ENCODE measurements at regions of chr7 and their contacts with region 1.

Region 1: GRCh38 chr7:65872776-65873581 is at the start of gene VKORC1L1:
- DNase-seq: peak; percentile 76 to 97 (median 94)

Region 2: DNA sequence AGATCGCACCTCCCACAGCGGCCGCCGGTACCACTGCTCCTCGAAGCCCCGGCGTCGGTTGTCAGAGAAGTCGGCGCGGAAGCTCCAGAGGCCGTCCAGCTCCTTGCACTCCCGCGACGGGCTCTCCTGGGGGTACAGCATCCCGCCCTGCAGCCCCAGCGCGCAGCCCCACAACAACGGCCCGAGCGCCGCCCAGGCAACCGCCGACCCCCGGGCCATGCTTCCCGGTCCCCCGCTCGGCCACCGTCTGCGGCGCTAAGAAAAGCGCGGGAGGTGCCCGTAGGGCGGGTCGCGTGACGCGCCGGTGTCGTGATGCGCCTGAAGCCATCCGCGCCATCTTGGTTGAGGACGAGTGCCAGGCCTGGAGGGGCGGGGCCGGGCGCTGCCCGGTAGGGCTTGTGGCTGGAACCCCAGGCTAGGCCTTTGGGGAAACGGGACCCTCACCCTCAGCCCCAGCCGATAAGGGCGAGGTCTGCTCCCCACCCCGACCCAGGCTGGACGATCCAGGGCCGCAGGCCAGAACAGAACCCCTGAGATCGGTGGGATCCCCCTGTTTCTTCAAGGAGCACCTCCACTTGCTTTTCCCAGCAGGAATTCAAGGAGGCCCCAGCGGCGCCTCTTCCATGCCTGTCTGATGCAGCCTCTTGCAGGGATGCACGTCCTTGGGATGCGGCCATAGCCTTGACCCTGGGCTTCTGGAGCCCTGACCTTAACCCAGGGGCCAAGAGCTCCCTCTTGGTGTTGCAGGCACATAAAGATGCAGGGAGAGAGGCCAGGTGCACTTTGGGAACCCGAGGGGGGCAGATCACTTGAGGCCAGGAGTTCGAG is 109.2 kb after region 1 on chr7 and contains the start of gene GUSB:
- intact Hi-C with region 1: loop called (anchors 5 kb)
- DNase-seq: peak; percentile 88 to 98 (median 95)